Calu3 (cell line): ENCODE measurements at regions of chr20 and their contacts with region 1.

Region 1: DNA sequence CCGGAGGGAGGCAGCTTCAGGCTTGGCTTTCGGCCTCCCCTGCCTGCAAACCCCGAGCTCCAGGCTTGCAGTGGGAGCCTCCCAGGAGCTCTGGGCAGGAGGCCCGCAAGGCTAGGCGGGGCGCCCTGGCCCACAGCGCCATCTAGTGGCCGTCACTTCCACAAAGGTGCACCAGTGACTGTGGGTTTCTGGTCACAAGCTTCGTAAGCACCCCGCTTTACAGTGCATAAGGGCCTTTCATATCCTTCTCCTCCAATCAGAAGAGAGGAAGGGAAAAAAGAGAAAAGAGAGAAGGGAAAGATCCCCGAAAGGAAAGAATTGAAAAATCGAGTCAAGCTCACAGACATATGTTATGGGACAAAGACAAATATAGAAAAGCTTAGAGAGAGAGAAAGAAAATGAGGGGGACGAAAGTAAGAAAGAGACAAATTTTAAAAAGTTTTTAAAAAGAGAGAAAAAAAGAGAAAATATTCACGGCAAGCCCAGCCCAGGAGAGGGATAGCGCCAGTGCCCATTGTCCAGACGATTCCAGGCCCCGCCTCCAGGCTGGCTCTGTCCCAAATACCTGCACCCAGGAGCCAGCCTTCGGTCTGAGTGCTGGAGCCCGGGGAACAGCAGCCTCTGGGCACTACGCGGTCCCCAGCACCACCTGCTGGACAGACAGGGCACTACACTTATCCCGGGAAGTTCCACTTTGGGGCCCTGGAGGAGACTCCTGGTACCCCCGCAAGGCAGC is 207.1 kb downstream of the PREX1 start:
- DNase-seq: peak; percentile 99
- H3K4me3 Mint-ChIP-seq: peak overlapping the region; percentile 65
- H3K27ac Mint-ChIP-seq: peak overlapping the region; percentile 83
- H3K4me1 Mint-ChIP-seq: peaks cover 21% of the 10 kb centered on the region
- H3K27me3 Mint-ChIP-seq: no peaks in the 10 kb centered on the region
- CTCF ChIP-seq: peak; percentile 97

Region 2: GRCh38 chr20:47725248-47725973 is 895.3 kb before region 1 on chr20:
- CTCF ChIA-PET with region 1: interaction called, 10 read pairs
- intact Hi-C with region 1: loop called (anchors 1 kb)
- DNase-seq: peak; percentile 93
- H3K4me3 Mint-ChIP-seq: no peak overlapping the region
- H3K27ac Mint-ChIP-seq: no peak overlapping the region
- H3K4me1 Mint-ChIP-seq: no peaks in the 10 kb centered on the region
- H3K27me3 Mint-ChIP-seq: no peaks in the 10 kb centered on the region
- CTCF ChIP-seq: peak; percentile 95

Region 3: DNA sequence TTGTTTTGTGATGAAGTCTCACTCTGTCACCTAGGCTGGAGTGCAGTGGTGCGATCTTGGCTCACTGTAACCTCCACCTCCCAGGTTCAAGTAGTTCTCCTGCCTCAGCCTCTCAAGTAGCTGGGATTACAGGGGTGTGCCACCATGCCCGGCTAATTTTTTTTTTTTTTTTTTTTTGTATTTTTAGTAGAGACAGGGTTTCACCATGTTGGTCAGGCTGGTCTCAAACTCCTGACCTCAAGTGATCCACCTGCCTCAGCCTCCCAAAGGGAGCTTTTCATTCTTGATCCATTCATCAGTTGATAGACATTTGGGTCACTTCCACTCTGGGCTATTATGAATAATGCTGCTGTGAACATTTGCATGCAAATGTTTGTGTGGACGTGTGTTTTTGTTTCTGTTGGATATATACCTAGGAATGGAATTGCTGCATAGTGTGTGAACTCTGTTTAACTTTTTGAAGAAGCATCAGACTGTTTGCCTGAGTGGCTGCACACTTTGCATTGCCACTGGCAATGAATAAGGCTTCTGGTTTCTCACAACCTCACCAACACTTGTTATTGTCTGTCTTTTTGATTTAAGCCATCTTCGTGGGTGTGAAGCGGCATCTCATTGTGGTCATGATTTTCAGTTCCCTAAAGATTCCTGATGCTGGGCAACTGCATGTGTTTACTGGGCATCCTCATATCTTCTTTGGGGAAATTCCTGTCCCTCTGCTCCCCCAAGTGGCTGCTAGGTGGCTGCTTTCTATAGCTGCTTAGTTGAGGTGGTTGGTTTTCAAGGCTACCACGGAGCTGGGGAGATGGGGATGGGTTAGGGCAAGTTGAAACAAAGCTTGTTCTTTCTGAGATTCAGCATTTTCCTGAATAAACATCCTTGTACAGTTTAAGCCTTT is 431.8 kb before region 1 on chr20:
- CTCF ChIA-PET with region 1: interaction called, 12 read pairs
- intact Hi-C with region 1: no loop called
- DNase-seq: peak; percentile 52
- H3K4me3 Mint-ChIP-seq: no peak overlapping the region
- H3K27ac Mint-ChIP-seq: no peak overlapping the region
- H3K4me1 Mint-ChIP-seq: peaks cover 16% of the 10 kb centered on the region
- H3K27me3 Mint-ChIP-seq: no peaks in the 10 kb centered on the region
- CTCF ChIP-seq: peak; percentile 53

Region 4: DNA sequence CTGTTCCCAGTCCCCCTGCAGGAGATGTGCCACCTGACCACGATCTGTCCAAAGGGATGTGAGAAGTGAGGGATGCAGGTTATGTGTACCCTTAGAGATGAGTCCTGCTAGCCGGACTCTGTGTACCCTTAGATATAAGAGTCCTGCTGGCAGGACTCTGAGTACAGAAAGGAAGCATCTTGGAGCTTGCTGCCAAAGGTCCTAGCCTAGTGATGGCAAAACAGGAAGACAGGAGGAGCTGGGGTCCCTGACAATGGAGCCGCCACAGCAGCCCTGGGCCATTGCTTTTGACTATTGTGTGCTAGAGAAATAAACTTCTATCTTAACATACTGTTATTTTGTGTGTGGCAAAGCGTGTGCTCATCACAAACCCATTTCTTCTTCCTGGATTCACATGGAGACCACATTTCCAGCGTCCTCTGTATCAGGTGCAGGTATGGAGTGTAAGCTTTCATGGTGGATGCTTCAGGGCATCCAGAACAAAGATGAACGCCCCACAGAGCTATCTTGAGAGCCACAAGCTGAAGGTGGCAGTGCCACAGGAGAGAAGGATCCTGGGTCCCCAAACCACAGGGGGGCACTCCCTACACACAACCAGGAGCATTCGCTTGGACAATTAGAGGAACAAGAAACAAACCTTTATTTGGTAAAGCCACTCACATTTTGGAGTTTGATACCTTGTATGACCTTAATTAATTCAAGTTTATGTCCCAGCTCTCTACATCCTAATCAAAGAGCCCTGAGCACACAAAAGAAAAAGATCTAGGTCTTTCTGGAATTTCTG is 199.3 kb before region 1 on chr20:
- CTCF ChIA-PET with region 1: interaction called, 66 read pairs
- intact Hi-C with region 1: loop called (anchors 1 kb)
- DNase-seq: peak; percentile 64
- H3K4me3 Mint-ChIP-seq: no peak overlapping the region
- H3K27ac Mint-ChIP-seq: no peak overlapping the region
- H3K4me1 Mint-ChIP-seq: peaks cover 8% of the 10 kb centered on the region
- H3K27me3 Mint-ChIP-seq: peaks cover 12% of the 10 kb centered on the region
- CTCF ChIP-seq: peak; percentile 56

Region 5: GRCh38 chr20:48538420-48539203 is 82.1 kb before region 1 on chr20:
- CTCF ChIA-PET with region 1: interaction called, 26 read pairs
- intact Hi-C with region 1: loop called (anchors 2 kb)
- DNase-seq: peak; percentile 96
- H3K4me3 Mint-ChIP-seq: peak overlapping the region; percentile 24
- H3K27ac Mint-ChIP-seq: peak overlapping the region; percentile 79
- H3K4me1 Mint-ChIP-seq: peaks cover 52% of the 10 kb centered on the region
- H3K27me3 Mint-ChIP-seq: no peaks in the 10 kb centered on the region
- CTCF ChIP-seq: no peak